Endothelial cell of umbilical vein (primary cell): ENCODE measurements at regions of chr10 and their contacts with region 1.

Region 1: GRCh38 chr10:35563261-35563891 is 41.8 kb upstream of the GJD4 start:
- DNase-seq: peak; percentile 78
- H3K4me3 ChIP-seq: no peak overlapping the region
- H3K27ac ChIP-seq: no peak overlapping the region
- H3K4me1 ChIP-seq: peaks cover 12% of the 10 kb centered on the region
- H3K27me3 ChIP-seq: no peaks in the 10 kb centered on the region
- CTCF ChIP-seq: peak; percentile 97 to 100
- POLR2A ChIP-seq: no peak

Region 2: DNA sequence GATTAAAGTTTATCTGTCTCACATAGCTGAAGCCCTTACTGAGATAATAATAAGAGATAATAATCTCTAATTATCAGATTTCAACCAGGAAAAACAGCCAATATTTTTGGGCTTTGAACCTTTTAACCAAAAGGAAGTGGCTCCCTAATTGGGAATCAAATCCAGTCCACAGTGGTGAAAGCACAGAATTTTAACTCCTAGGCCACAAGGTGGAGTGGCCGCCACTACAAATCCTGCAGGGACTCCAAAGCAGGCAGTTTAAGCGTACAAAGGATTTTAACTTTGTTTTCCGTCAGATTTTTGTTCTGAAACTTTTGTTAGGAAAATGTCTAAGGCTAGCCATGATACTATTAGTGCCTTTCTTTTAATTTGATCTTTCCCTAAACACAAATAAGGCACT is 326.6 kb before region 1 on chr10:
- CTCF ChIA-PET with region 1: interaction called, 10 read pairs
- POLR2A ChIA-PET with region 1: no interaction called
- dilution Hi-C with region 1: no loop called
- intact Hi-C with region 1: loop called (anchors 2 kb)
- DNase-seq: peak; percentile 26
- H3K4me3 ChIP-seq: no peak overlapping the region
- H3K27ac ChIP-seq: no peak overlapping the region
- H3K4me1 ChIP-seq: no peaks in the 10 kb centered on the region
- H3K27me3 ChIP-seq: no peaks in the 10 kb centered on the region
- CTCF ChIP-seq: peak; percentile 12 to 35
- POLR2A ChIP-seq: no peak

Region 3: GRCh38 chr10:35379226-35380137 is 183.9 kb before region 1 on chr10:
- CTCF ChIA-PET with region 1: interaction called, 17 read pairs
- POLR2A ChIA-PET with region 1: no interaction called
- dilution Hi-C with region 1: no loop called
- intact Hi-C with region 1: loop called (anchors 1 kb)
- DNase-seq: peak; percentile 99
- H3K4me3 ChIP-seq: peak overlapping the region in 1 of 3 experiments; percentile 41
- H3K27ac ChIP-seq: peak overlapping the region; percentile 97
- H3K4me1 ChIP-seq: peaks cover 51% of the 10 kb centered on the region
- H3K27me3 ChIP-seq: no peaks in the 10 kb centered on the region
- CTCF ChIP-seq: peak; percentile 7 to 16
- POLR2A ChIP-seq: no peak

Region 4: GRCh38 chr10:35574924-35575352 is 11.6 kb after region 1 on chr10:
- CTCF ChIA-PET with region 1: interaction called, 55 read pairs
- POLR2A ChIA-PET with region 1: no interaction called
- dilution Hi-C with region 1: no loop called
- intact Hi-C with region 1: no loop called
- DNase-seq: peak; percentile 85
- H3K4me3 ChIP-seq: no peak overlapping the region
- H3K27ac ChIP-seq: peak overlapping the region; percentile 65
- H3K4me1 ChIP-seq: peaks cover 31% of the 10 kb centered on the region
- H3K27me3 ChIP-seq: no peaks in the 10 kb centered on the region
- CTCF ChIP-seq: peak; percentile 32 to 36
- POLR2A ChIP-seq: no peak

Region 5: DNA sequence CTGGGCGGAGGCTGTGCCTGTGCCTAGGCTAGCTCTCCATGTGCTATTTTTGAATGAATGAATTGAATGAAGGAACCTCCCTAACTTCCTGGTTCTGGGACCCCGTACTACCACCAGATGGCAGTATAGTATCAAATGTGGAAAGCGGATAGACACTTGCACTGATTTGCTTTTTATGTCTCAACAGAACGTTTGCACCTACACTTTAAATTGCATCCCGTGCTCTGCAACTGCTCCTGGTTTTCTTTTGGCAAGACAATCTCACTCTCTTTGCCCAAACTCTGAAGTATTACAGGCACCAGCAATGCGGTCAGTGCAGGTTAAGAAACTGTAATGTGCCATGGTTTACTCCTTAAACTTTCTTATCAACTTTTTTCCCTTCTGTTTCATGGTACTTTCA is 72.2 kb after region 1 on chr10:
- CTCF ChIA-PET with region 1: interaction called, 11 read pairs
- POLR2A ChIA-PET with region 1: no interaction called
- dilution Hi-C with region 1: no loop called
- intact Hi-C with region 1: no loop called
- DNase-seq: peak; percentile 79
- H3K4me3 ChIP-seq: no peak overlapping the region
- H3K27ac ChIP-seq: no peak overlapping the region
- H3K4me1 ChIP-seq: peaks cover 18% of the 10 kb centered on the region
- H3K27me3 ChIP-seq: peaks cover 2 to 3% of the 10 kb centered on the region in 2 experiments
- CTCF ChIP-seq: peak; percentile 77 to 85
- POLR2A ChIP-seq: no peak

Region 6: GRCh38 chr10:36880898-36881297 is 1317.5 kb after region 1 on chr10:
- CTCF ChIA-PET with region 1: interaction called, 16 read pairs
- POLR2A ChIA-PET with region 1: interaction called, 3 read pairs
- dilution Hi-C with region 1: no loop called
- intact Hi-C with region 1: no loop called
- DNase-seq: peak; percentile 20
- H3K4me3 ChIP-seq: no peak overlapping the region
- H3K27ac ChIP-seq: no peak overlapping the region
- H3K4me1 ChIP-seq: no peaks in the 10 kb centered on the region
- H3K27me3 ChIP-seq: peaks cover 0 to 4% of the 10 kb centered on the region in 2 experiments
- CTCF ChIP-seq: peak; percentile 14 to 48
- POLR2A ChIP-seq: no peak